ENCODE measurements at regions of chr15 and their contacts with region 1.

Region 1: DNA sequence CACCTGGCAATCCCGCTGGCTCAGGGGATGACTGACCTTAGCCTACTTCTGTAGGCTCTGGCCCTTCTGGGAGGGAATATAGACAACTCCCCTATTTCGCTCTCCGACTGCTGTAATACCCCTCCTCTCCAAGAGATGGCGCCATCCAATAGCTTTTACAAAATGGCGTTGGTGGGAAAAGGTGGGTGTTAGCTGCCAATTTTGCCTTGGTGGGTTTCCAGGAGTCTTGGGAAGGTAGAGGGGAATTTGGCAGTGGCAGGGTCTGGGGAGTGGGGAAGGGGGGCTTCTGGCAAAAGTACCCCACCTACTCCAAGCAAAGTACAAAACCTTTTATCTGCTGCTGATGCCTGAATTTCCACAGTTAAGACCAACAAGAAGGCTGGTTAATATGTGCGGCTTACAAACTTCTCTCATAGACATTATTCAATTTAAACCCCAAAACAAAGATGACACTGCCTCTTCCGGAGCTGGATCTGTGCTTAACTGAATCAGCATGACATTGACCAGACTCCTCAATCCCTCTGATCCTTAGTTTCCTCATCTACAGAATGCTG is 62.1 kb downstream of the RASGRF1 start:
- DNase-seq: peak in 2 of 3 donors; percentile 10 to 15
- H3K4me3 ChIP-seq: no peak overlapping the region
- H3K4me3 Mint-ChIP-seq: no peak overlapping the region
- H3K27ac ChIP-seq: no peak overlapping the region
- H3K27ac Mint-ChIP-seq: peak overlapping the region in 1 of 7 donors; percentile 17
- H3K4me1 ChIP-seq: peaks cover 0 to 7% of the 10 kb centered on the region in 2 donors
- H3K4me1 Mint-ChIP-seq: peaks cover 11% of the 10 kb centered on the region
- H3K27me3 ChIP-seq: no peaks in the 10 kb centered on the region
- H3K27me3 Mint-ChIP-seq: peaks cover 0 to 6% (median under 1%) of the 10 kb centered on the region in 3 donors
- CTCF ChIP-seq: peak; percentile 77

Region 2: DNA sequence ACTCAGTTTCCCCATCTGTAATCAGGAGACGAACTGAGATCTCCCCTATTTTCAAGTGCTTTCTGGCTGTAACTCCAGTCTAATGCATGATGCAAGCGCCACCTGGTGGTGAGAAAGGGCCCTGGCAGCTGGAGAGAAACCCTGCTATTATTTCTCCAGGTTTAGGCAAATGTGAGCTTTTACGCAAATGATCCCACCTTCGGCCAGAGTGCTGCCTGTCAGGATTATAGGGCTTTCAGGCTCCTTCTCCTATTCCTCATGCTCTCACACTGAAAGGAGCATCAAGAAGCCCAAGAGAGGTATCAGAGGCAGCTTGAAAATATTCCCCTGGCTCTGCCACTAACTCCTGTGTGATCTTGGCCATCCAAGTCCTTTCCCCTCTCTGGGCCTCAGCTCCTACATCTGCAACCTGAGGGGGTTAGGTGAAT is 156.0 kb after region 1 on chr15:
- intact Hi-C with region 1: loop called (anchors 5 kb)
- DNase-seq: peak; percentile 36 to 57 (median 50)
- H3K4me3 ChIP-seq: no peak overlapping the region
- H3K4me3 Mint-ChIP-seq: no peak overlapping the region
- H3K27ac ChIP-seq: no peak overlapping the region
- H3K27ac Mint-ChIP-seq: peak overlapping the region in 1 of 7 donors; percentile 50
- H3K4me1 ChIP-seq: no peaks in the 10 kb centered on the region
- H3K4me1 Mint-ChIP-seq: no peaks in the 10 kb centered on the region
- H3K27me3 ChIP-seq: no peaks in the 10 kb centered on the region
- H3K27me3 Mint-ChIP-seq: peaks cover 0 to 9% (median 3%) of the 10 kb centered on the region in 3 donors
- CTCF ChIP-seq: peak; percentile 94